Activated CD8-positive, alpha-beta T cell treated with anti-CD3 and anti-CD28 coated beads, Interleukin-2, amount 10 ng/mL, durations not matched to agents 7 days and 5 days (primary cell): ENCODE measurements at regions of chr18 and their contacts with region 1.

Region 1: GRCh38 chr18:63439334-63439733 is 17.1 kb upstream of the VPS4B start:
- DNase-seq: peak; percentile 59
- ATAC-seq: peak; percentile 60
- H3K4me3 Mint-ChIP-seq: no peak overlapping the region
- H3K27ac Mint-ChIP-seq: no peak overlapping the region
- H3K4me1 Mint-ChIP-seq: peaks cover 3% of the 10 kb centered on the region
- H3K27me3 Mint-ChIP-seq: peaks cover 21% of the 10 kb centered on the region

Region 2: GRCh38 chr18:63016270-63016669 is 423.1 kb before region 1 on chr18:
- CTCF ChIA-PET with region 1: interaction called, 37 read pairs
- POLR2A ChIA-PET with region 1: no interaction called
- DNase-seq: peak; percentile 66
- ATAC-seq: peak; percentile 57
- H3K4me3 Mint-ChIP-seq: no peak overlapping the region
- H3K27ac Mint-ChIP-seq: no peak overlapping the region
- H3K4me1 Mint-ChIP-seq: no peaks in the 10 kb centered on the region
- H3K27me3 Mint-ChIP-seq: peaks cover 38% of the 10 kb centered on the region

Region 3: DNA sequence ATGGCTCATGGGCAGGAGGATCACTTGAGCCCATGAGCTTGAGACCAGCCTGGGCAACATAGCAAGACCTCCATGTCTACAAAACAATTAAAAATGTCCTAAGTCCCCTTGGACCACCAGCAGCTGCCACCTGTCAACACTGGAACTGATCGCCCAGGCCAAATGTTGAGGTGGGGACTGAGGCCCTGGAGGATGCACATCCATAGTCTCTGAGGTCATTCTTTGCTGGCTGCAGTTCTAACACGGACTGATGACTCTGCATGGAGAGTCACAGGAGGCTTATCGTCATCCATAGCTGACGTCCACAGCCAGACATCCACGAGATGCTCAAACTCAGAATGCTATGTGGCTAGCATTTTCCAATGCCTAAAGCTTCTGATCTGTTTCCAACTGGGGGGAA is 271.0 kb before region 1 on chr18:
- CTCF ChIA-PET with region 1: no interaction called
- POLR2A ChIA-PET with region 1: no interaction called
- DNase-seq: no peak
- ATAC-seq: no peak
- H3K4me3 Mint-ChIP-seq: no peak overlapping the region
- H3K27ac Mint-ChIP-seq: no peak overlapping the region
- H3K4me1 Mint-ChIP-seq: peaks cover 52% of the 10 kb centered on the region
- H3K27me3 Mint-ChIP-seq: no peaks in the 10 kb centered on the region

Region 4: GRCh38 chr18:63325086-63325686 is 114.1 kb before region 1 on chr18:
- CTCF ChIA-PET with region 1: interaction called, 31 read pairs
- POLR2A ChIA-PET with region 1: no interaction called
- DNase-seq: no peak
- ATAC-seq: no peak
- H3K4me3 Mint-ChIP-seq: no peak overlapping the region
- H3K27ac Mint-ChIP-seq: no peak overlapping the region
- H3K4me1 Mint-ChIP-seq: peaks cover 23% of the 10 kb centered on the region
- H3K27me3 Mint-ChIP-seq: no peaks in the 10 kb centered on the region

Region 5: GRCh38 chr18:63348508-63349136 is 90.7 kb before region 1 on chr18:
- CTCF ChIA-PET with region 1: interaction called, 13 read pairs
- POLR2A ChIA-PET with region 1: no interaction called
- DNase-seq: no peak
- ATAC-seq: no peak
- H3K4me3 Mint-ChIP-seq: no peak overlapping the region
- H3K27ac Mint-ChIP-seq: no peak overlapping the region
- H3K4me1 Mint-ChIP-seq: no peaks in the 10 kb centered on the region
- H3K27me3 Mint-ChIP-seq: no peaks in the 10 kb centered on the region

Region 6: GRCh38 chr18:63410792-63411191 is 28.5 kb before region 1 on chr18:
- CTCF ChIA-PET with region 1: interaction called, 20 read pairs
- POLR2A ChIA-PET with region 1: no interaction called
- DNase-seq: no peak
- ATAC-seq: peak; percentile 58
- H3K4me3 Mint-ChIP-seq: no peak overlapping the region
- H3K27ac Mint-ChIP-seq: peak overlapping the region; percentile 18
- H3K4me1 Mint-ChIP-seq: peaks cover 50% of the 10 kb centered on the region
- H3K27me3 Mint-ChIP-seq: no peaks in the 10 kb centered on the region

Region 7: DNA sequence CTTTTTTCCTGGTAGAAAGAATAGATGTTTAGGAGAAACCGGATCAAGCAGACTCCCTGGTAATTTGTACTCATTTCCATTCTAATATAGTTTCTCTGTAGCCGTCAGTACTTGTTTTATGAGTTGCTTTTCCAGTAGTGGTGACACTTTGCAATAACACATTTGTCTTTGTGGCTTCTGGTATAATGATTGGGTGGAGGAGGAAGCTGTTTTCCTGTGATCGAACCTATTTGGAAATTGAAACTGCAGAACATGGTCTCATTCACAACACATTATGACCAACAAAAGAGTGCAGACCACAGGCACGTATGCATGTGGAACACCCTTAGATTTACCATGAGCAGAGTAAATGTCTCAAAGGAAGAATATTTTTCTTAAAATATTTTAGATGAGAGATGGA is 95.3 kb after region 1 on chr18:
- CTCF ChIA-PET with region 1: no interaction called
- POLR2A ChIA-PET with region 1: no interaction called
- DNase-seq: no peak
- ATAC-seq: no peak
- H3K4me3 Mint-ChIP-seq: no peak overlapping the region
- H3K27ac Mint-ChIP-seq: no peak overlapping the region
- H3K4me1 Mint-ChIP-seq: peaks cover 5% of the 10 kb centered on the region
- H3K27me3 Mint-ChIP-seq: peaks cover 23% of the 10 kb centered on the region

Region 8: DNA sequence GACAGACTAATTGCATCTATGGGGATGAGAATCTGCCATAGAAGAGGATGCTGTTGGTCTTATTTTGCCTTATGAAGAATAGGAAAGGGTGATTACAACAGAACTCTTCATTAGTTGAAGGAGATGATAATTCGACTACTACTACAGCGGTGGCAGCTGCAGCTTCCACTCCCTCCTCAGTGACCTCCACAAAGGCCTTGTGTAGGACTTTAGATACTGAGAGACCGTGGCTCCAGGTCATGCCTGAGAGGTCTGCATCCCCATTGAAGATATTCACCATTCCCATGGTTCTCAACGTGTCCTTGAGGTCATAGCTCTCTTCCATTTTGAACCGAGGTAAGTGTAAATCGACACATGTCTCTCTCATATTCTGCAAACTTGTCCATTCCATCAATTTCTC is 198.4 kb after region 1 on chr18:
- CTCF ChIA-PET with region 1: no interaction called
- POLR2A ChIA-PET with region 1: no interaction called
- DNase-seq: no peak
- ATAC-seq: no peak
- H3K4me3 Mint-ChIP-seq: no peak overlapping the region
- H3K27ac Mint-ChIP-seq: no peak overlapping the region
- H3K4me1 Mint-ChIP-seq: no peaks in the 10 kb centered on the region
- H3K27me3 Mint-ChIP-seq: no peaks in the 10 kb centered on the region